ENCODE measurements at regions of chr14 and their contacts with region 1.

Region 1: DNA sequence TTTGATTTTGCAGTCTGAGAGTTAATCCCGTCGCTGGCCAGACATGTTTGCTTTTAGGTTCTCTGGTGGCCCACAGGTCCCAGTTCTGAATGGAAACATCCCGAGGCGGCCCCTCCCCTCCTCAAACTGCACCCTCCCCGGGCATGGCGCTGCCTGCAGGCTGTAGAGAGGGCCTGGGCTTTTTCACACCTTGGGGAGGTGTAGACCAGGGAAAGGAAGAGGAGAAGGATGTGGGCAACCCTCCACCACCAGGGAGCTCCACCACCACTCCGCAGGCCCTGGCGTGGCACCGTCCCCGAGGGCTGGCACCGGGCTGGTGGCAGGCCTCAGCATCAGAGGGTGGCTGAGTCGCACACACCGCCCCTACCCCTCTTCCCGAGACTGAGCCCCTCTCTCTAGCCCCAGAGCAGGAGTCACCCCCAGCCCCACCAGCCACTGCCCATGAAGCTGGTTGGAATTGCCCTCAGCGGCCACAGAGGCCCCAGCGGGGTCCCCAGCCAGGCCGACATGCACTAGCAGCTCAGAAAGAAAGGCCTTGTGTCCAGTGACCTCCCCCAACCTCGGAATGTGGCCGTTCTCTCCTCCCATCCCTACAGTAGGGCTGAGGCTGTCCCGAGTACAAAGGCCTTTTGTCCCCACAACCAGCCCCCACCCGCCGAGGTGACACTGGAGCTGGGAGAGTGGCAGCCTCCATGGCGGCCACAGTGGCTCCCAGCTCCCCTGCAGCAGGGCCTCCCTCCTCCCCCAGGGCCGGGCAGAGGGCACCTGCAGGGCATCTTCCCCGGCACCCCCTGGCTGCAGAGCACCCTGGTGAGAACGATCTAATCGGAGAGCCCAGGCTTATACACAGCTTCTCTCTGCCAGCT is 23.5 kb upstream of the INF2 start:
- DNase-seq: peak; percentile 95
- H3K4me3 Mint-ChIP-seq: peak overlapping the region; percentile 6
- H3K27ac Mint-ChIP-seq: peak overlapping the region; percentile 76
- H3K4me1 Mint-ChIP-seq: peaks cover 22% of the 10 kb centered on the region
- H3K27me3 Mint-ChIP-seq: no peaks in the 10 kb centered on the region
- CTCF ChIP-seq: peak; percentile 14

Region 2: GRCh38 chr14:104545151-104545941 is 120.5 kb before region 1 on chr14:
- CTCF ChIA-PET with region 1: no interaction called
- intact Hi-C with region 1: no loop called
- DNase-seq: no peak
- H3K4me3 Mint-ChIP-seq: no peak overlapping the region
- H3K27ac Mint-ChIP-seq: no peak overlapping the region
- H3K4me1 Mint-ChIP-seq: no peaks in the 10 kb centered on the region
- H3K27me3 Mint-ChIP-seq: peaks cover 83% of the 10 kb centered on the region
- CTCF ChIP-seq: no peak

Region 3: GRCh38 chr14:104677512-104678332 is 11.8 kb after region 1 on chr14:
- CTCF ChIA-PET with region 1: interaction called, 47 read pairs
- intact Hi-C with region 1: loop called (anchors 2 kb)
- DNase-seq: peak; percentile 74
- H3K4me3 Mint-ChIP-seq: peak overlapping the region; percentile 73
- H3K27ac Mint-ChIP-seq: peak overlapping the region; percentile 90
- H3K4me1 Mint-ChIP-seq: peaks cover 43% of the 10 kb centered on the region
- H3K27me3 Mint-ChIP-seq: no peaks in the 10 kb centered on the region
- CTCF ChIP-seq: no peak

Region 4: DNA sequence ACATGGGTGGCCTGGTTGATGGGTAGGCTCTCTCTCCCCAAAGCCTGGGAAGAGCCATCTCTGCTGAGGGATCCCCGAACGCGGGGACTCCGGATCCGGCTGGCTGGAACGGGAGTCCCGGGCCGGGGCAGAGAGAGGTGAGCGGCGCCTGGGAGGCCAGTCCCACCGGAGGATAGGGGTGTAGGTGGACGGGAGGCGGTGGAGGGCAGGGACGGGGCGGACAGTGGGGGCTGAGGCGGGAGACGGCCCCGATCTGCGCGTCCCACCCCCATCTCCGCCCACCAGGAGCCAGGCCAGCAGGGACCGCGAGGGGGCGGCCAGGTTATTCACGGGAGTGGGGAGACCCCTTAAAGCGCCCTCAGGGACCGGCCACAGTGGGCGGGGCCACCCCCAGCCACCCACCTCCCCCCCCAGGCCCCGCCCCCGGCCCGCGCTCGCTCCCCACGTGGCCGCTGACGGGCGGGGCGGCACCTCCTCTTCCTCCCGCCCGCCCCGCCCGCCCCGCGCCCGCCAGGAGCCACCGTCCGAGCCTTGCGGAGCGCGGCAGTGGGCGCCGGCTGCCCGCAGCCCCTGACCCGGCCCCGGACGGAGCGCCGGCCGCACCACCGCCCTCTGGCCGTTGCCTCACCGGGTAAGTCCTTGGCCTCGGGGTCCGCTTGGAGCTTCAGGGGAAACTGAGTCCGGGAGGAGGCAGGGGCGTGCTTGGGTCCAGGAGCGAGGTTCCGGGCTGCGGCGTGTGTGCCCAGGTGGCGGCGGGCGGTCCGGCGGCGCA is 23.4 kb after region 1 on chr14 and contains the start of gene INF2:
- CTCF ChIA-PET with region 1: interaction called, 31 read pairs
- intact Hi-C with region 1: no loop called
- DNase-seq: peak; percentile 78
- H3K4me3 Mint-ChIP-seq: peak within 1 kb of the TSS; percentile 64
- H3K27ac Mint-ChIP-seq: peak within 1 kb of the TSS; percentile 61
- H3K4me1 Mint-ChIP-seq: peaks cover 44% of the 10 kb centered on the region
- H3K27me3 Mint-ChIP-seq: no peaks in the 10 kb centered on the region
- CTCF ChIP-seq: no peak
- total RNA-seq, gene INF2: 208 and 220 TPM in 2 replicates

Region 5: GRCh38 chr14:104708606-104709268 is 42.8 kb after region 1 on chr14:
- CTCF ChIA-PET with region 1: interaction called, 11 read pairs
- intact Hi-C with region 1: loop called (anchors 5 kb)
- DNase-seq: peak; percentile 79
- H3K4me3 Mint-ChIP-seq: no peak overlapping the region
- H3K27ac Mint-ChIP-seq: peak overlapping the region; percentile 54
- H3K4me1 Mint-ChIP-seq: no peaks in the 10 kb centered on the region
- H3K27me3 Mint-ChIP-seq: no peaks in the 10 kb centered on the region
- CTCF ChIP-seq: peak; percentile 87

Measured in Calu3 (cell line).